Left colon (tissue), 2 donors: ENCODE measurements at regions of chr10 and their contacts with region 1.

Region 1: GRCh38 chr10:34637418-34637911 is 177.6 kb downstream of the PARD3 start:
- DNase-seq: peak in 1 of 2 donors; percentile 75
- ATAC-seq: peak; percentile 51

Region 2: DNA sequence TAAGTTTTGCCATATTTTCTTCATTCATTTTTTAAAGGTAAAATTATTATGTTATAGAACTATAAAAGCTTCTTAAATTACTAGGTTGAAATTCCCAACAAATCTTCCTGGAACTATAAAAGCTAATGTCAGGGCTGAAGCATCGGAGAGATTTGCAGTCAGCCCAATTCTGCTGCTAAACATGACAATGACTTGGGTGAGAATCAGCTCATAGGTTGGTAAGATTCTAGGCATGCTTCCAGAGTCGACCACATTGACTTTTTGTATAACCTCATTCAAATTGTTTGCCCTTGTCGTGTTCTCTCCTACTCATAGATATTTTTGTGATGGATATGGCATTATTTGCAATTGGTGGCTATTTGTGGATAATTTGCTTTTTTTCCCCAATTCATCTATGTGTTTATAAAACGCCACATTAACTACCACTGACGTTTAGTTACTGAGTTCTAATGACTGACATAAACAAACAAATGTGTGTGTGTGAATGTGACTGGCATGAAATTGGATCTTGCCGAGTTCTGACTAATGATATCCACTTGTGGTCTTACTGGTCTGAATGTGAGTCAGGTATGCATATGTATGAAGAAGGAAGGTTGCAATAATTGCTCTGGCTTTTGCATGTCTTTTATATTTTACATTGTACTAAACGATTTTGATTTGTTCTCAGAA is 402.2 kb before region 1 on chr10:
- intact Hi-C with region 1: loop called in 1 of 2 experiments (anchors 10 kb)
- DNase-seq: no peak
- ATAC-seq: no peak

Region 3: GRCh38 chr10:34538281-34538829 is 99.1 kb before region 1 on chr10:
- intact Hi-C with region 1: no loop called
- DNase-seq: peak in 1 of 2 donors; percentile 12
- ATAC-seq: no peak